Natural killer cell (primary cell): ENCODE measurements at regions of chr1 and their contacts with region 1.

Region 1: GRCh38 chr1:2381741-2382620 is 9.4 kb downstream of the MORN1 start:
- DNase-seq: peak; percentile 74 to 86
- ATAC-seq: peak; percentile 86 to 100 (median 96)
- H3K4me3 ChIP-seq: no peak overlapping the region
- H3K4me3 Mint-ChIP-seq: no peak overlapping the region
- H3K27ac ChIP-seq: no peak overlapping the region
- H3K27ac Mint-ChIP-seq: no peak overlapping the region
- H3K4me1 ChIP-seq: peaks cover 22% of the 10 kb centered on the region
- H3K4me1 Mint-ChIP-seq: no peaks in the 10 kb centered on the region
- H3K27me3 ChIP-seq: no peaks in the 10 kb centered on the region
- H3K27me3 Mint-ChIP-seq: no peaks in the 10 kb centered on the region
- CTCF ChIP-seq: peak; percentile 77

Region 2: GRCh38 chr1:1943834-1944570 is 438.0 kb before region 1 on chr1:
- intact Hi-C with region 1: loop called (anchors 10 kb)
- DNase-seq: peak; percentile 54 to 76
- ATAC-seq: peak; percentile 71 to 99 (median 96)
- H3K4me3 ChIP-seq: no peak overlapping the region
- H3K4me3 Mint-ChIP-seq: no peak overlapping the region
- H3K27ac ChIP-seq: no peak overlapping the region
- H3K27ac Mint-ChIP-seq: no peak overlapping the region
- H3K4me1 ChIP-seq: peaks cover 10% of the 10 kb centered on the region
- H3K4me1 Mint-ChIP-seq: peaks cover 0 to 8% of the 10 kb centered on the region in 2 donors
- H3K27me3 ChIP-seq: peaks cover 2% of the 10 kb centered on the region
- H3K27me3 Mint-ChIP-seq: no peaks in the 10 kb centered on the region
- CTCF ChIP-seq: peak; percentile 85

Region 3: DNA sequence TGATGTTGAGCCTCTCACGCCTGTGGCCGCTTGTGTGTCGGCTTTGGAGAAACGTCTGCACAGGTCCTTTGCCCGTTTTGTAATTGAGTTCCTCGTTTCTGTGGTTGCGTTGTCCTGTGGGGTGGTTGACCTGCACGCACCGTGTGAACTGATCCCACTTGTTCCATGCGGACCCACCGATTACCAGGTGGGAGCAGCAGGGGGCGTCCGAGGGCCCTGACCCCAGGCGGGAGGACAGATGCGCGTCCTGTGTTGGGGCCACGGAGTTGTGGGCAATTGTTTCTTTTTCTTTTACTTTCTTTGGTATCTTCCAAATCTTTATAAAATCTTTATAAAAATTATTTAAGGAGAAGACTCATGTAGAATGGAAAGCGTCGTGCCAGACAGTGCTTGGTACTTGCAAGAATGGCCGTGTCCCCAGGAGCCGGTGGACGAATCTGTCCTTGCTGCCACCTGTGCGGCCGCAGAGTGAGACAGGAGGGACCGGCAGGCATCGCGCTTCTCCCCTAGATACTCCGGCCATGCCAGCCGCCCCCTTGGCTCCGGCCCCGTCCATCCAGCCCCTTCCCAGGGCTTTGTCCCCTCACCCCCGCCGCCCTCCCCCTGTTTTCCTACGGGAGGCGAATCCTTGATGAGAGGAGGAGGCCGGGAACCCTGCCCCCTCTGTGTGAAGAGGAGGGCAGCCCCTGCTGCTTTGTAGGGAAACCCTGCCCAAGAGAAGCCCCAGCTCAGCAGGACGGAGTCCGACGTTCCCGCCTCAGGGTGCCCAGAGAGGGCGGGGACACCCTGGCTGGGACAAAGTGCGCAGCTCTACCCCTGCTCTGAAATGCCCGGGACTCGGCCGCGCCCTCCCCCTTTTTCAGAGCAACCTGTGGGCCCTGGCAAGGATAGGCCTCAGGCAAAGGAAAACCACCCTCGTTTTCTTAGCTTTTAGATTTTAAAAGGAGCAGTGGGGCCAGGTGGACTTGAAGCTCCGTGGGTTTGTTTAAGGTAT is 290.1 kb before region 1 on chr1:
- intact Hi-C with region 1: loop called (anchors 5 kb)
- DNase-seq: peak in 1 of 2 donors; percentile 60
- ATAC-seq: peak in 2 of 3 donors; percentile 40 to 59
- H3K4me3 ChIP-seq: no peak overlapping the region
- H3K4me3 Mint-ChIP-seq: no peak overlapping the region
- H3K27ac ChIP-seq: no peak overlapping the region
- H3K27ac Mint-ChIP-seq: no peak overlapping the region
- H3K4me1 ChIP-seq: no peaks in the 10 kb centered on the region
- H3K4me1 Mint-ChIP-seq: no peaks in the 10 kb centered on the region
- H3K27me3 ChIP-seq: no peaks in the 10 kb centered on the region
- H3K27me3 Mint-ChIP-seq: no peaks in the 10 kb centered on the region
- CTCF ChIP-seq: peak; percentile 45

Region 4: DNA sequence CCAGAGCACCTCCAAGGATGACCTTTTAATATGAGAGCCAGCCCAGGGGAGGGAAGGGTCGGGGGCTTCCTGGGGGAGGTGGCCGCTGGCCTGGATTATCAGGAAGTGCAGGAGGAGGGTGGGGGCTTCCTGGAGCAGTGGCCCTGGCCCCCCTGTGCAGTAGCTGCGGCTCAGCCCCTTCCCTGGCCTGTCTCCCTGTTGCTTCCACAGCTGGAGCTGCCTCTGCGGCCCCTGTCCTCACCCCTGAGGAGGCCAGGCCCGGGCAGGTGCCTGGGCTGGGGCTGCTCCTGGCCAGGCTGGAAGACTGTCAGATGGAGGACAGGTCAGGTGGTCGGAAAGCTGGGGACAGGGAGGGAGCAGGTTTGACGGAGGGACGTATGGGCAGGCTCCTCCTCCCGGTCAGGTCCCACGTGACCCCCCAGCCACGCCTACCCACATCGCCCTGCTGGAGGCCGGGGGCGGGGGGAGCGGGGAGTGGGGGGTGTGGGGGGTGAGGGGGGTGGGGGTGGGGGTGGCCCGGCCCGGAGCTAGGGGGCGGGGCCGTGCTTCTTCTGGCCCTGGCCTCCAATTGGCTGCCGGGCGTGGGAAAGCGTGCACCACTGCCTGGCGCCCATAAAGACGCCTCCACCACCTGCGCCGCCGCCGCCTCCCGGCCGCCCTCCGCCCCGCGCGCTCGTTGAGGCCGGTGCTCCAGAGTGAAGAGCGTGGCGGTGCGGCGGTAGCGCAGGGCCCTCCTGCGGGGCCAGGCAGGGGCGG is 164.0 kb after region 1 on chr1:
- intact Hi-C with region 1: no loop called
- DNase-seq: peak; percentile 85 to 95
- ATAC-seq: peak; percentile 52 to 75 (median 65)
- H3K4me3 ChIP-seq: peak overlapping the region; percentile 93
- H3K4me3 Mint-ChIP-seq: peak overlapping the region; percentile 94
- H3K27ac ChIP-seq: peak overlapping the region; percentile 97
- H3K27ac Mint-ChIP-seq: peak overlapping the region; percentile 94 to 97
- H3K4me1 ChIP-seq: peaks cover 68% of the 10 kb centered on the region
- H3K4me1 Mint-ChIP-seq: peaks cover 0 to 31% of the 10 kb centered on the region in 2 donors
- H3K27me3 ChIP-seq: no peaks in the 10 kb centered on the region
- H3K27me3 Mint-ChIP-seq: no peaks in the 10 kb centered on the region
- CTCF ChIP-seq: no peak